Activated CD4-positive, alpha-beta T cell treated with anti-CD3 and anti-CD28 coated beads for 36 hours (primary cell): ENCODE measurements at regions of chr11 and their contacts with region 1.

Region 1: GRCh38 chr11:43358801-43359421 is at the start of gene TTC17:
- DNase-seq: peak; percentile 97
- ATAC-seq: peak; percentile 96
- H3K4me3 Mint-ChIP-seq: peak within 1 kb of the TSS; percentile 98
- H3K27ac Mint-ChIP-seq: peak within 1 kb of the TSS; percentile 99
- H3K4me1 Mint-ChIP-seq: peaks cover 45% of the 10 kb centered on the region
- H3K27me3 Mint-ChIP-seq: no peaks in the 10 kb centered on the region
- total RNA-seq, gene TTC17: 50.0 to 57.9 TPM

Region 2: GRCh38 chr11:43341159-43341558 is 17.8 kb before region 1 on chr11:
- CTCF ChIA-PET with region 1: interaction called, 4 read pairs
- POLR2A ChIA-PET with region 1: interaction called, 3 read pairs
- intact Hi-C with region 1: loop called in 1 of 2 experiments (anchors 1 kb)
- DNase-seq: no peak
- ATAC-seq: no peak
- H3K4me3 Mint-ChIP-seq: no peak overlapping the region
- H3K27ac Mint-ChIP-seq: no peak overlapping the region
- H3K4me1 Mint-ChIP-seq: no peaks in the 10 kb centered on the region
- H3K27me3 Mint-ChIP-seq: no peaks in the 10 kb centered on the region

Region 3: GRCh38 chr11:44065841-44066731 is 707.2 kb after region 1 on chr11 and contains the start of gene ACCS:
- CTCF ChIA-PET with region 1: no interaction called
- POLR2A ChIA-PET with region 1: no interaction called
- intact Hi-C with region 1: loop called in 1 of 2 experiments (anchors 2 kb)
- DNase-seq: peak; percentile 91
- ATAC-seq: peak; percentile 95
- H3K4me3 Mint-ChIP-seq: peak within 1 kb of the TSS; percentile 79
- H3K27ac Mint-ChIP-seq: peak within 1 kb of the TSS; percentile 90
- H3K4me1 Mint-ChIP-seq: peaks cover 22% of the 10 kb centered on the region
- H3K27me3 Mint-ChIP-seq: no peaks in the 10 kb centered on the region
- total RNA-seq, gene ACCS: 6.6 to 7.2 TPM